ENCODE measurements at regions of chr1 and their contacts with region 1.

Region 1: GRCh38 chr1:44002606-44003157 is 11.3 kb downstream of the CCDC24 start:
- H3K4me3 ChIP-seq: no peak overlapping the region
- H3K27ac ChIP-seq: no peak overlapping the region
- H3K4me1 ChIP-seq: no peaks in the 10 kb centered on the region
- CTCF ChIP-seq: no peak

Region 2: DNA sequence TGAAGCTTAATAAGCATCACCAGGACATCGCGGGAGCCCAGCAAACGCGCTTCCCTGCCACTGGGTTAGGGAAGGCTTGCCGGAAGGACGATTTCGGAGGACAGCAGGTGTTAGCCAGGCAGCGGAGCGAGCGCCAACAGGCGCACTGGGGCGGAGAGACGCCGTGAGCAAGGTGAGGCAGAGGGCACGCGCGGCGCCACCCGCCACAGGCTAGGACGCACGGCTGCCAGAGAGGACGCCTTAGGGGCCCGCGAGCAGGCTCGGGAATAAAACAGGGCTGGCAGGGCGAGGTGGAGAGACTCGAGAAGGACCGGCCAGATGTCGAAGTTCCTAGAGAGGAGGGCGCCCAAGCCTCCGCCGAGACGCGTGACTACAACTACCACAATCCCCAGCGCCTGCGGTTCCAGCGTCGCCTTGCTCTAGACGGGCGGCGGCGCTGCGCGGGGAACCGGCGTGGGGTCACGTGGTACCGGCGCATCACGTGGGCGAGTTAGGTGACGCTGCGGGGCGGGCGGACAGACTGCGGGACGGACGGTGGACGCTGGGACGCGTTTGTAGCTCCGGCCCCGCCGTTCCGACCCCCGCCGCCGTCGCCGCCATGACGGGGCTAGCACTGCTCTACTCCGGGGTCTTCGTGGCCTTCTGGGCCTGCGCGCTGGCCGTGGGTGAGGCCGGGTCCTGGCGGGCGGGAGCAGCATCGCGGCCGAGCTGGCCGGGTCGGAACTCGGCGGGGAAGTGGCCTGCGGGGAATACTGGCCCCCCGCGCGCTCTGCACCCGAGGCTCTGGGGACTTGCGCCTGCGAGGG is 28.0 kb before region 1 on chr1 and contains the start of gene ATP6V0B:
- CTCF ChIA-PET with region 1: no interaction called
- POLR2A ChIA-PET with region 1: no interaction called
- H3K4me3 ChIP-seq: peak within 1 kb of the TSS; percentile 88
- H3K27ac ChIP-seq: peak within 1 kb of the TSS; percentile 70
- H3K4me1 ChIP-seq: no peaks in the 10 kb centered on the region
- CTCF ChIP-seq: peak; percentile 89

Region 3: GRCh38 chr1:43991476-43992231 is 11.0 kb before region 1 on chr1 and contains the start of gene CCDC24:
- CTCF ChIA-PET with region 1: interaction called, 36 read pairs
- POLR2A ChIA-PET with region 1: no interaction called
- H3K4me3 ChIP-seq: peak within 1 kb of the TSS; percentile 72
- H3K27ac ChIP-seq: peak within 1 kb of the TSS; percentile 39; the same call in 1 of the 2 replicates
- H3K4me1 ChIP-seq: no peaks in the 10 kb centered on the region
- CTCF ChIP-seq: 0 out of 2 replicates have a peak, but pooled peaks have one; percentile 25

Region 4: GRCh38 chr1:44019466-44019948 is 16.8 kb after region 1 on chr1:
- CTCF ChIA-PET with region 1: interaction called, 21 read pairs
- POLR2A ChIA-PET with region 1: no interaction called
- H3K4me3 ChIP-seq: no peak overlapping the region
- H3K27ac ChIP-seq: no peak overlapping the region
- H3K4me1 ChIP-seq: no peaks in the 10 kb centered on the region
- CTCF ChIP-seq: no peak

Region 5: GRCh38 chr1:44029906-44030604 is 27.4 kb after region 1 on chr1:
- CTCF ChIA-PET with region 1: interaction called, 110 read pairs
- POLR2A ChIA-PET with region 1: no interaction called
- H3K4me3 ChIP-seq: peak overlapping the region; percentile 67
- H3K27ac ChIP-seq: peak overlapping the region; percentile 85
- H3K4me1 ChIP-seq: peaks cover 5% of the 10 kb centered on the region; the same call in 1 of the 2 replicates
- CTCF ChIP-seq: no peak; the same call in 1 of the 2 replicates

Region 6: DNA sequence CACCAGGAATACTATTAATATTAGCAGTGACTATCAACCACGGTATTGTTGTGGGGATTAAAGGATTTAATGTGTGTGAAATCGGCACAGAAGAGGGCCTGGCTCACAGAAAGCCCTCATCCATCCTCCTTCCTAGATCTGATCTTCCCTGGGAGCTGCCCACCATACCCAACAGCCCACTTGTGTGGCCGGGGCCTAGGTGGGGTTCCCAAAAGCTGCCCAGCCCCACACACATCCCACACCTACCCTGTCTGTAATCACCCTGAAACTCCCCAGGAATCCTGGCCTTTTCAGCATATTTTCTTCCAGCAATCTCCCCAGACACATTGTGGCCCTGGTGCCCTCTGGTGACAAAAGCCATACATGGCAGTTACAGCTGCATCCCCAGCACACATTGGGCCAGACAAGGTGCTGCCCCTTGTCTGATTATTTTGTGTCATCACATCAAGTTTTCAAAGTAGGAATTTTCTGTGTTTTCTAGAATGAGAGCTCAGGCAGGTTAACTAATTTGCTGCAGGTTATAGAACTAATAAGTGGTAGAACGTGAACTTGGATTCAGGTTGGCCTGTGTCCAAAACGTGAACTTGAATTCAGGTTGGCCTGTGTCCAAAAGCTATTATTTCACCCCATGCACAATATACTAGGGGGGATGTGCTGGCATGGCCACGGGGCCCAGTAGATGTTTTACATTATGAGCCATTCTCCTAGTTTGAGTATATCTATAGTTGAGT is 33.9 kb after region 1 on chr1:
- CTCF ChIA-PET with region 1: interaction called, 110 read pairs
- POLR2A ChIA-PET with region 1: interaction called, 9 read pairs
- H3K4me3 ChIP-seq: no peak overlapping the region
- H3K27ac ChIP-seq: no peak overlapping the region; the same call in 1 of the 2 replicates
- H3K4me1 ChIP-seq: peaks cover 3% of the 10 kb centered on the region; the same call in 1 of the 2 replicates
- CTCF ChIP-seq: peak; percentile 50

Region 7: DNA sequence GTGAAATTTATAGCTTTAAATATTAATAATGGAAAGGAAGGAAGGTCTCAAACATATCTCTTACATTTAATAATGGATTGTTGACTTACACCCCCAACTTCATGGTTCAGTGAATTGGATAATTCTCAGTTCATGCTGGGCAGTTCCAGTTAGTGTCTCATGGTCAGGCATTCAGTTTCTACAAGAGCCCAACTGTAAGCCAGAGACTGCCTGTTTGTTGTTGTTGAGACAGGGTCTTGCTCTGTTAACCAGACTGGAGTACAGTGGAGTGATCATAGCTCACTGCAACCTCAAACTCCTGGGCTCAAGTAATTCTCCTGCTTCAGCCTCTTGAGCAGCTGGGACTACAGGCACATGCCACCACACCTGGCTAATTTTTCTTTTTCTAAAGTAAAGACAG is 205.5 kb after region 1 on chr1:
- CTCF ChIA-PET with region 1: interaction called, 10 read pairs
- POLR2A ChIA-PET with region 1: no interaction called
- H3K4me3 ChIP-seq: no peak overlapping the region
- H3K27ac ChIP-seq: no peak overlapping the region
- H3K4me1 ChIP-seq: no peaks in the 10 kb centered on the region
- CTCF ChIP-seq: no peak

Region 8: GRCh38 chr1:44237721-44238457 is 235.2 kb after region 1 on chr1:
- CTCF ChIA-PET with region 1: no interaction called
- POLR2A ChIA-PET with region 1: no interaction called
- H3K4me3 ChIP-seq: no peak overlapping the region
- H3K27ac ChIP-seq: peak overlapping the region; percentile 58; the same call in 1 of the 2 replicates
- H3K4me1 ChIP-seq: peaks cover 19% of the 10 kb centered on the region
- CTCF ChIP-seq: peak; percentile 94